ENCODE measurements at regions of chr9 and their contacts with region 1.

Region 1: GRCh38 chr9:130866474-130866965 is 30.1 kb downstream of the QRFP start:
- DNase-seq: peak; percentile 89
- ATAC-seq: peak; percentile 91
- H3K4me3 ChIP-seq: no peak overlapping the region
- H3K27ac ChIP-seq: no peak overlapping the region
- H3K4me1 ChIP-seq: peaks cover 8% of the 10 kb centered on the region
- H3K27me3 ChIP-seq: no peaks in the 10 kb centered on the region
- CTCF ChIP-seq: peak; percentile 90
- EP300 ChIP-seq: no peak
- POLR2A ChIP-seq: no peak
- RAD21 ChIP-seq: peak; percentile 61

Region 2: GRCh38 chr9:130707225-130707976 is 159.1 kb before region 1 on chr9:
- CTCF ChIA-PET with region 1: interaction called, 14 read pairs
- POLR2A ChIA-PET with region 1: no interaction called
- in situ Hi-C with region 1: loop called (anchors 5 kb)
- intact Hi-C with region 1: loop called (anchors 1 kb)
- DNase-seq: peak; percentile 63
- ATAC-seq: peak; percentile 65
- H3K4me3 ChIP-seq: no peak overlapping the region
- H3K27ac ChIP-seq: no peak overlapping the region
- H3K4me1 ChIP-seq: no peaks in the 10 kb centered on the region; the same call in 1 of the 2 replicates
- H3K27me3 ChIP-seq: no peaks in the 10 kb centered on the region
- CTCF ChIP-seq: peak; percentile 67
- EP300 ChIP-seq: no peak
- POLR2A ChIP-seq: no peak
- RAD21 ChIP-seq: 0 out of 2 replicates have a peak, but pooled peaks have one; percentile 31

Region 3: GRCh38 chr9:130770679-130771442 is 95.7 kb before region 1 on chr9:
- CTCF ChIA-PET with region 1: interaction called, 19 read pairs
- POLR2A ChIA-PET with region 1: no interaction called
- in situ Hi-C with region 1: loop called (anchors 5 kb)
- intact Hi-C with region 1: loop called (anchors 1 kb)
- DNase-seq: peak; percentile 50
- ATAC-seq: peak; percentile 65
- H3K4me3 ChIP-seq: no peak overlapping the region
- H3K27ac ChIP-seq: no peak overlapping the region
- H3K4me1 ChIP-seq: peaks cover 32% of the 10 kb centered on the region
- H3K27me3 ChIP-seq: no peaks in the 10 kb centered on the region
- CTCF ChIP-seq: peak; percentile 69
- EP300 ChIP-seq: no peak
- POLR2A ChIP-seq: no peak
- RAD21 ChIP-seq: no peak; the same call in 1 of the 2 replicates

Region 4: GRCh38 chr9:130940693-130941576 is 74.4 kb after region 1 on chr9:
- CTCF ChIA-PET with region 1: interaction called, 12 read pairs
- POLR2A ChIA-PET with region 1: no interaction called
- in situ Hi-C with region 1: no loop called
- intact Hi-C with region 1: loop called (anchors 1 kb)
- DNase-seq: peak; percentile 47
- ATAC-seq: peak; percentile 75
- H3K4me3 ChIP-seq: no peak overlapping the region
- H3K27ac ChIP-seq: no peak overlapping the region
- H3K4me1 ChIP-seq: peaks cover 24% of the 10 kb centered on the region
- H3K27me3 ChIP-seq: peaks cover 11 to 87% of the 10 kb centered on the region in 2 experiments
- CTCF ChIP-seq: peak; percentile 94
- EP300 ChIP-seq: no peak
- POLR2A ChIP-seq: no peak
- RAD21 ChIP-seq: peak; percentile 87

Region 5: DNA sequence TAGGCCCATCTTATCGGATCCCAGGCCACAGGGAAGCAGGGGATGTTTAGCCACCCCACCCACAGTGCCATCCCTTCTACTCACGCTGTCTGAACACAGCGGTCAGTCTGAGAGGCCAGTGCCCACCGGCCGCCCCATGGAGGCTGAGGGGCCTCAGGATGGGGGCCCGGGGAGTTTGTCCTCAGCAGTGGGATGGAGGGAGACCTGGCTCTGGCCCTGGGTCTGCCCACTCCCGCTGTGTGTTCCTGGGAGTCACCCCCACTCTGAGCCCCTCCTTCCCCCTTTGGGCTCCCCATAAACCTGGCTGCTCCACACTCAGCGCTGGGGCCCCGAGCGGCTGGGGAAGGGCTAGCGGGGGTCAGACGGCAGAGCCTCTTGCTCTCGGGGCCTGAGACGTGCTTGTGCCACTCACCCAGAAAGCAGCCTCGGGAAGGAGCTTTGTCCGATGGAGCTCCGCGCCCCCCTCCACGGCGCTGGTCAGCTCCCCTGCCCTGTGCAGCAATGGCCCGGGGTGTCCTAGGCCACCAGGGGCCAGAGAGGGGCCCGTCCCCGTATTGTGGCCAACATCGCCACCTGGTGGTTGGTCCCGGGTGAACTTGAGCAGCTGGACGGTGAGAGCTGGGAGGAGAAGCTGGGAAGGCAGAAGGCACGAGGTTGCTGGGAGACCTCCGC is 131.5 kb after region 1 on chr9:
- CTCF ChIA-PET with region 1: interaction called, 8 read pairs
- POLR2A ChIA-PET with region 1: no interaction called
- in situ Hi-C with region 1: no loop called
- intact Hi-C with region 1: loop called (anchors 2 kb)
- DNase-seq: peak; percentile 56
- ATAC-seq: peak; percentile 94
- H3K4me3 ChIP-seq: no peak overlapping the region; a peak in 1 of 6 replicates
- H3K27ac ChIP-seq: no peak overlapping the region
- H3K4me1 ChIP-seq: no peaks in the 10 kb centered on the region
- H3K27me3 ChIP-seq: peaks cover 15 to 85% of the 10 kb centered on the region in 2 experiments
- CTCF ChIP-seq: peak; percentile 94
- EP300 ChIP-seq: no peak
- POLR2A ChIP-seq: no peak
- RAD21 ChIP-seq: peak; percentile 86

Region 6: DNA sequence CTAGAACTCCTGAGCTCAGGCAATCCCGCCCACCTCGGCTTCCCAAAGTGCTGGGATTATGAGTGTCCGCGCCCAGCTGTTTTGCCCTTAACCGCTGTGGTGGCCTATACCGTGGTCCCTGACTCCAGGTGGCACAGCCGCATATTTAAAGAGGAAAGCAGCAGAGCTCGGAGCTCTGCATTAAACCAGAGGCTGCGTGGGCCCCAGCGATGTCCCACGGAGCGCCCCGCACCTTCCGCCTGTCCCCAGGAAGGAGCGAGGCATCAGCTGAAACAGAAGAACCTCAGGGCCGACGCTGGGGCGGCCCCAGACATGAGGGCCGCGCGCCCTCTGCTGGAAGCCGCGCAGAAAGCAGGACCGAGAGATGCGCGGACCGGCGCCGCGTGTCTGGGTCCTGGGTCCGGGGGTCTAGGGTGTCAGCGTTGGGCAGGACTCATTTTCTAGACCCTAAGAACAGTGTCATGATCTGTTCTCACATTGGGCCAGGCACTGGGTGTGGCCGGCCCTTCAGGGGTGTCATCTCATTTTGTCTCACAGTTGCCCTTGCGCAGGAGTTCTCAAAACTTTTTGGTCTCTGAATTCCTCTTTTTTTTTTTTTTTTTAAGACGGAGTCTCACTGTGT is 180.2 kb after region 1 on chr9:
- CTCF ChIA-PET with region 1: interaction called, 7 read pairs
- POLR2A ChIA-PET with region 1: no interaction called
- in situ Hi-C with region 1: no loop called
- intact Hi-C with region 1: loop called (anchors 5 kb)
- DNase-seq: peak; percentile 53
- ATAC-seq: peak; percentile 90
- H3K4me3 ChIP-seq: peak overlapping the region in 1 of 3 experiments; percentile 40; a peak in 2 of 6 replicates
- H3K27ac ChIP-seq: no peak overlapping the region
- H3K4me1 ChIP-seq: no peaks in the 10 kb centered on the region
- H3K27me3 ChIP-seq: peaks cover 3 to 47% of the 10 kb centered on the region in 2 experiments; a peak in 3 of 5 replicates
- CTCF ChIP-seq: peak; percentile 96
- EP300 ChIP-seq: no peak
- POLR2A ChIP-seq: no peak
- RAD21 ChIP-seq: peak; percentile 92